Posterior cingulate gyrus (tissue), 11 donors: ENCODE measurements at regions of chr3 and their contacts with region 1.

Region 1: GRCh38 chr3:79361748-79362378 is 405.9 kb downstream of the ROBO1 start:
- DNase-seq: no peak

Region 2: GRCh38 chr3:79086514-79086913 is 275.3 kb before region 1 on chr3:
- intact Hi-C with region 1: loop called (anchors 5 kb)
- DNase-seq: peak in 9 of 10 donors; percentile 7 to 72 (median 37)